GM12878 (cell line): ENCODE measurements at regions of chr7 and their contacts with region 1.

Region 1: DNA sequence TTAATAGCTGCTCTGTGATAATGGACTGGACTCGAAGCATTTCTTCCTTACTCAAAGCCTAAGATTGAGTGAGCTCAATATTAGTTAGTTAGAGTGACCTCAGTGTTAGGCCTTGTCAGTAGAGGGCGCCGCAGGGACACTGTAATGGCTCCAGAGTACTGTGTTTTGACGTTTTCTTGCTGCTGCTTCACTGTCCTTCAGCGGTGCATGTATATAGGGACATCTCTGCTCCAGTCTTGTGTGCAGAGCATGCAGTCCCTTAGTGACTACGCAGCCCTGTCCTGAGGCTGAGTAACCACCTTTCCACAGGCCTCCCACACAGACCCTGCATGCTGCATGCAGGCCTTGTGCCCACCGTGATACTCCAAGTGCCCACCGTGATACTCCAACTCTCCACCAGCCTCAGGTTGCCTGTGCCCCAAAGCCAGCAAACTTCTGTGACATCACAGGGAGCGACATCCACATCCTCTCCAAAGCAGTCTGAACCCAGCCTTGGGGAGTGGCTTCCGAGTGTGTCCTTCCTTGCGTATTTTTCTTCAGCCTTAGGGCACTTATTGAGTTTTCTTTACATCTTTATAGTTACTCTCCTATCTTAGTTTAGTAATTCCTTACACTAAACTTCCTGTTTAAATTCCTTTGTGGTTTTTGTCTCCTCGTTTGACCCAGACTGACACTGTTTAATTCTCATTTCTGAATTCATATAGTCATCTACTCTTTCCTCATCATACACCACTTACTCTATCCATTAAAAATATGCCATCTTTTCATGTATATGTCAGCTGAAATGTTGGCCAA is 118.2 kb downstream of the JAZF1 start:
- DNase-seq: no peak
- ATAC-seq: peak; percentile 96
- H3K4me3 ChIP-seq: no peak overlapping the region
- H3K27ac ChIP-seq: no peak overlapping the region
- H3K4me1 ChIP-seq: no peaks in the 10 kb centered on the region
- H3K27me3 ChIP-seq: peaks cover 0 to 4% of the 10 kb centered on the region in 2 experiments; a peak in 2 of 4 replicates
- CTCF ChIP-seq: peak; percentile 70 to 82 (median 79)
- EP300 ChIP-seq: no peak
- POLR2A ChIP-seq: no peak
- RAD21 ChIP-seq: peak; percentile 59

Region 2: GRCh38 chr7:28078036-28078901 is 15.9 kb after region 1 on chr7:
- CTCF ChIA-PET with region 1: interaction called, 110 read pairs
- POLR2A ChIA-PET with region 1: no interaction called
- RAD21 ChIA-PET with region 1: interaction called, 5 read pairs
- SMC1A ChIA-PET with region 1: interaction called, 16 read pairs
- in situ Hi-C with region 1: no loop called
- intact Hi-C with region 1: no loop called
- DNase-seq: no peak
- ATAC-seq: peak; percentile 63; the same call in 2 of the 3 replicates
- H3K4me3 ChIP-seq: no peak overlapping the region
- H3K27ac ChIP-seq: no peak overlapping the region
- H3K4me1 ChIP-seq: no peaks in the 10 kb centered on the region
- H3K27me3 ChIP-seq: no peaks in the 10 kb centered on the region; a peak in 3 of 4 replicates
- CTCF ChIP-seq: peak; percentile 88 to 99 (median 96)
- EP300 ChIP-seq: no peak
- POLR2A ChIP-seq: no peak
- RAD21 ChIP-seq: peak; percentile 68

Region 3: GRCh38 chr7:28083164-28083997 is 21.0 kb after region 1 on chr7:
- CTCF ChIA-PET with region 1: interaction called, 110 read pairs
- POLR2A ChIA-PET with region 1: no interaction called
- RAD21 ChIA-PET with region 1: interaction called, 5 read pairs
- SMC1A ChIA-PET with region 1: interaction called, 16 read pairs
- in situ Hi-C with region 1: no loop called
- intact Hi-C with region 1: no loop called
- DNase-seq: no peak
- ATAC-seq: no peak
- H3K4me3 ChIP-seq: no peak overlapping the region
- H3K27ac ChIP-seq: no peak overlapping the region
- H3K4me1 ChIP-seq: no peaks in the 10 kb centered on the region
- H3K27me3 ChIP-seq: no peaks in the 10 kb centered on the region; a peak in 3 of 4 replicates
- CTCF ChIP-seq: no peak
- EP300 ChIP-seq: no peak
- POLR2A ChIP-seq: no peak
- RAD21 ChIP-seq: no peak

Region 4: DNA sequence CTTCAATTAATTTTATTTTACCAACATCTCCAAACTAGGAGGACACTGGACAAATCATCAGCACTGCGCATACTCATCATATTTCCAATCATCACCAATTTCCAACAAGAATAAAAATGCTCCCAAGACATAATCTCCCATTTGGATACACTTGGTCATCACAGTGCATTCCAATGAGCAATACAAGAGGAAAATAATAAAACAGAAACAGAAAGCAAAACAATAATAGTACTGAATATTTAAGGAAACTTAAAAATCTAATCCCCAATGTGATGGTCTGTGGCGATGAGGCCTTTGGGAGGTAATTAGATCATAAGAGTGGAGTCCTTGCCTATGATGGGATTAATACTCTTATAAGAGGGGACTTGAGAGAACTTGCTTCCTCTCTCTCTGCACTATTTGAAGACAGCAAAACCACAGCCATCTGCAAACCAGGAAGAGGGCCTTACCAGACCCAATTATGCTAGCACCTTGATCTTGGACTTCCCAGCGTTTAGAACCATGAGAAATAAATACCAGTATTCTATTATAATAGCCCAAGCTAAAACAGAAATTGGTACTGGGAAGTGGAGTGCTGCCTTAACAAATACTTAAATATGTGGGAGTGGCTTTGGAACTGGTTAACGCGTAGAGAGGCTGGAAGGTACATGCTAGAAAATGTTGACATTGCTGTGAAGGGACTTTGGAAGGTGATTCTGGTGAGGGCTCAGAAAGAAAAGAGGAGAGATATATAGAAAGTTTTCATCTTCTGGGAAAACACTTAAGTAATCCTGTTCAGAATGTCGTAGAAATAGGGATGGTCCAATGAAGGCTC is 26.7 kb after region 1 on chr7:
- CTCF ChIA-PET with region 1: interaction called, 126 read pairs
- POLR2A ChIA-PET with region 1: no interaction called
- RAD21 ChIA-PET with region 1: interaction called, 13 read pairs
- SMC1A ChIA-PET with region 1: interaction called, 12 read pairs
- in situ Hi-C with region 1: no loop called
- intact Hi-C with region 1: no loop called
- DNase-seq: no peak
- ATAC-seq: no peak
- H3K4me3 ChIP-seq: no peak overlapping the region
- H3K27ac ChIP-seq: no peak overlapping the region
- H3K4me1 ChIP-seq: no peaks in the 10 kb centered on the region
- H3K27me3 ChIP-seq: no peaks in the 10 kb centered on the region; a peak in 3 of 4 replicates
- CTCF ChIP-seq: no peak
- EP300 ChIP-seq: no peak
- POLR2A ChIP-seq: no peak
- RAD21 ChIP-seq: no peak

Region 5: GRCh38 chr7:28096713-28097112 is 34.3 kb after region 1 on chr7:
- CTCF ChIA-PET with region 1: interaction called, 126 read pairs
- POLR2A ChIA-PET with region 1: no interaction called
- RAD21 ChIA-PET with region 1: interaction called, 17 read pairs
- SMC1A ChIA-PET with region 1: interaction called, 25 read pairs
- in situ Hi-C with region 1: no loop called
- intact Hi-C with region 1: loop called (anchors 1 kb)
- DNase-seq: peak; percentile 12
- ATAC-seq: peak; percentile 67
- H3K4me3 ChIP-seq: no peak overlapping the region
- H3K27ac ChIP-seq: no peak overlapping the region
- H3K4me1 ChIP-seq: no peaks in the 10 kb centered on the region
- H3K27me3 ChIP-seq: no peaks in the 10 kb centered on the region; a peak in 1 of 4 replicates
- CTCF ChIP-seq: peak; percentile 73 to 78 (median 74)
- EP300 ChIP-seq: no peak
- POLR2A ChIP-seq: no peak
- RAD21 ChIP-seq: peak; percentile 74